Activated B cell treated with CpG ODN at 0.5 μM for 24 hours (primary cell): ENCODE measurements at regions of chr16 and their contacts with region 1.

Region 1: GRCh38 chr16:66872943-66873684 is 7.2 kb upstream of the PDP2 start:
- DNase-seq: peak; percentile 87
- ATAC-seq: peak; percentile 95
- H3K4me3 Mint-ChIP-seq: peak overlapping the region; percentile 80
- H3K27ac Mint-ChIP-seq: peak overlapping the region; percentile 76
- H3K4me1 Mint-ChIP-seq: peaks cover 15% of the 10 kb centered on the region
- H3K27me3 Mint-ChIP-seq: no peaks in the 10 kb centered on the region
- CTCF ChIP-seq: peak; percentile 51

Region 2: DNA sequence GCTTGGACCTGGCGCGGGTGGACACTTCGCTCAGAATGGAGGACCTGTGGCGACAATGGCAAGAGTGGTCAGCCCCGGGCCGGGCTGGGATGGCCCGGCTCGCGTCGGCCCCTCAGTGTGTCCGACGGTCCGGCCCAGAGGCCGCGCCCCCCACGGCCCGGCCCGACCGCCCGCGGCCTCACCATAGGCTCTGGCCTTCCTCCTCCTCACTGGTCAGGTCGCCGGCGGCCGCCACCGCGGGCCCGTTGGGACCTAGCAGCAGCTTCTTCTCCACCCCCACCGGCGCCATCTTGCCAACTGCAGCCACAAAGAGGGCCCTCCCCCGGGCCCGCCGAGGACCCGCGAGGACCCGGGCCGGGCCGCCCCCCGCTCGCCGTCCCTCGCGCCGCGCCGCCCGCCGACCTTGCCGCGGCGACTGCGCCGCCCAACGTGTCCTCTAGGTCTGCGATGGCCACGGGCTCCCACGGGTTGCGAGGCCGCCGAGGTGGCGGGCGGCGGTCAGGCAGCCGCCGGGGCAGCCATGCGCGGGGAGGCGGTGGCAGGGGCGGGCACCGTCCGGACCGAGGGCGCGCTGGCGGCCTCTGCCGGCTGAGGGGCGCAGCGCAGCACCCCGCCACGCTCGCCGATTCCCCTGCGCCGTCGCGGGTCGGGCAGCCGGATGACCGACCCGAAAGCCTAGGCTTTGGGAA is 121.7 kb before region 1 on chr16 and contains the start of gene DYNC1LI2:
- CTCF ChIA-PET with region 1: interaction called, 4 read pairs
- POLR2A ChIA-PET with region 1: no interaction called
- intact Hi-C with region 1: loop called (anchors 2 kb)
- DNase-seq: peak; percentile 92
- ATAC-seq: peak; percentile 96
- H3K4me3 Mint-ChIP-seq: peak within 1 kb of the TSS; percentile 88
- H3K27ac Mint-ChIP-seq: peak within 1 kb of the TSS; percentile 87
- H3K4me1 Mint-ChIP-seq: peaks cover 34% of the 10 kb centered on the region
- H3K27me3 Mint-ChIP-seq: peaks cover 7% of the 10 kb centered on the region
- CTCF ChIP-seq: no peak
- total RNA-seq, gene DYNC1LI2: 64.3 and 84.4 TPM in 2 replicates

Region 3: DNA sequence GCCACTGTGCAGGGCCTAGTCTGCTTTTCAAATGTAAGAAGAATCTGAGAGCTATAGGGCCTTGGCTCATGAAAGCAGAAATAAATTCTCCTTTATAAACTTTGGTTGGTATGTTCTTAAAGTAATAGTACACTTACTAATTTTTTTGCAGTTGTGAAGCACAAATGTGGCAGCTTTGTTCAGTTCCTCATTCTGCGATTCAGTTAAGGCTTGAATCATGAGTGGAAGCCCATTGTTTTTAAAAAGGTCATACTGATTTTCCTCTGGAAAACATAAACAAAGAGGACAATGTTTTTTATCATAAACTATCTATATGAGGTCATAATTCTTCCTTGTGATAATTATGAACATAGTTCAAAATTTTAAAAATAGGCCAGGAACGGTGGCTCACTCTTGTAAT is 98.1 kb before region 1 on chr16:
- CTCF ChIA-PET with region 1: no interaction called
- POLR2A ChIA-PET with region 1: no interaction called
- intact Hi-C with region 1: no loop called
- DNase-seq: no peak
- ATAC-seq: no peak
- H3K4me3 Mint-ChIP-seq: no peak overlapping the region
- H3K27ac Mint-ChIP-seq: no peak overlapping the region
- H3K4me1 Mint-ChIP-seq: no peaks in the 10 kb centered on the region
- H3K27me3 Mint-ChIP-seq: no peaks in the 10 kb centered on the region
- CTCF ChIP-seq: no peak

Region 4: DNA sequence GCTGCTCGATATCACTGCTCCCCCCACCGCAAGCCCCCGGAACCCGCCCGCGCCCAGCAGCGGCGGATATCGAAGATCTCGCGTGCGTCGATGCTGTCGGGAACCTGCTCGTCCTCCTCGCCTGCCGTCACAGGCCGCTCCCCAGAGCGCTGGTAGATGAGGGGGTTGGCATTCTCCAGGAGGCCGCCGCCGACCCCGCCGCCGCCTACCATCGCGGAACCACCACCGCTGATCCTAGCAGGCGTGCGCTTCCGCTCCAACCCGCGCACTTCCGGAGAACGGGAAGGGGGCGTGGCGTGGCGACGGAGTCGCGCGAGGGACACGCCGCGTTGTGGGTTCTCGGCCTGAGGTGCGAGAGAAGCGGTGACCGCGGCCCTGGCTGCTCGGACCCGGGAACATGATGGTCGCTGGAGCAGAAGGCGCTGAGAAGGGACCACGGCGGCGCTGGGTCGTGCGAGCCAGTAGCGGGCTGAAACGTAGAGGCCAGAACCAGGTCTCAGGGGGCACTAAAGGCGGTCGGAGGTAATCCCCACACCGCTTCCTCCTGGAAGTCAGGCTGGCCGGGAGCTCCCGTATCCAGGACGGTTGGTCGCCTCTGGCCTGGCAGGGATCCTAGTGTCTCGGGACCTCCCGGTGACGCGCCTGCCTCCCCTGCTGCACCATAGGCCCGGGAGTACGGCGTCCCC is 61.2 kb after region 1 on chr16 and contains the start of gene CIAO2B:
- CTCF ChIA-PET with region 1: no interaction called
- POLR2A ChIA-PET with region 1: interaction called, 6 read pairs
- intact Hi-C with region 1: loop called (anchors 2 kb)
- DNase-seq: peak; percentile 91
- ATAC-seq: peak; percentile 84
- H3K4me3 Mint-ChIP-seq: peak within 1 kb of the TSS; percentile 96
- H3K27ac Mint-ChIP-seq: peak within 1 kb of the TSS; percentile 93
- H3K4me1 Mint-ChIP-seq: peaks cover 57% of the 10 kb centered on the region
- H3K27me3 Mint-ChIP-seq: no peaks in the 10 kb centered on the region
- CTCF ChIP-seq: no peak
- total RNA-seq, gene CIAO2B: 65.8 and 66.2 TPM in 2 replicates